Activated CD4-positive, alpha-beta T cell treated with anti-CD3 and anti-CD28 coated beads for 36 hours (primary cell): ENCODE measurements at regions of chr5 and their contacts with region 1.

Region 1: DNA sequence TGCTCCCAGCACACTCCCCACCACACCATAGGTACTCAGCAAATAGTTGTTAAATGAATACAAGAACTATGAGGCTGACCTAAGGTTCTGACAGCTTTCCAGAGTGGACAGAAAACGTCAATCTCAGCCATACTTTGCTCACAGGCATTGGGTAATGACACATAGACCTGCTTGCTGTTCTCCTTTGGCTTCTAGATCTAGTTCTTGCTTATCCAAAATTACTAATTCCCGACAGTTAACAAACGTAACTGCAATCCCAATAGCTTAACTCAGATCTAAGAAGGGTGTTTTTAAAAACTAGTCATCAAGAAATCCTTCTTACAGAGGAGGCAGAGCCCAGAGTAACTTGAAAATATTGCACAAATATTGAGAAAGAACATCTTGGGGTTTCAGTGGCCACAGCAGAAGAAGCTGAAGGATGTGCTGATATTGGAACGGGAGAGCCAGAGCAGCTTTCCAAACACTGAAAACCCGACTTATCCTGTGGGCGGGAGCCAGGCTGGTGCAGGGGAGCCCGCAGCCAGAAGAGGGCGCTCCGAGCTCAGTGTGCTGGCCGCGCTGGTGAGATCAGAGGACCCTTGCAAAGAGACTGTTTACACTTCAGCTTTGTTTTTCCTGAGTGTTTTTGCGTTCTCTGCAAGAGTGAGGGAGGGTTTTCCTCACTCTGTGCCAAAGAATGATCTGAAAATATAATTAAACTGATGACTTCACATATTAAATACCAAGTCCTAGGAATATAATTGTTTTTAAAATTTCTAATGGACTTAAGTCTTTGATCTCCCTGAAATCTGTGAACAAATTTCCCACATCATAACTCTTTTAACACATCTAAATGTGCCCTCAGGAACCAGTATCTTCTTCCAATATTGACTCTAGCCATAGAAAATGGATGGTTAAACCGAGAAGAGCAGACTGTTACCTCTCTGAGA is 30.3 kb downstream of the FGF1 start:
- DNase-seq: peak; percentile 86
- ATAC-seq: peak; percentile 97
- H3K4me3 Mint-ChIP-seq: no peak overlapping the region
- H3K27ac Mint-ChIP-seq: no peak overlapping the region
- H3K4me1 Mint-ChIP-seq: peaks cover 4% of the 10 kb centered on the region
- H3K27me3 Mint-ChIP-seq: peaks cover 2% of the 10 kb centered on the region

Region 2: GRCh38 chr5:142611154-142611553 is 44.4 kb before region 1 on chr5:
- CTCF ChIA-PET with region 1: interaction called, 7 read pairs
- POLR2A ChIA-PET with region 1: no interaction called
- intact Hi-C with region 1: loop called (anchors 1 kb)
- DNase-seq: peak; percentile 85
- ATAC-seq: peak; percentile 97
- H3K4me3 Mint-ChIP-seq: no peak overlapping the region
- H3K27ac Mint-ChIP-seq: no peak overlapping the region
- H3K4me1 Mint-ChIP-seq: no peaks in the 10 kb centered on the region
- H3K27me3 Mint-ChIP-seq: peaks cover 12% of the 10 kb centered on the region

Region 3: DNA sequence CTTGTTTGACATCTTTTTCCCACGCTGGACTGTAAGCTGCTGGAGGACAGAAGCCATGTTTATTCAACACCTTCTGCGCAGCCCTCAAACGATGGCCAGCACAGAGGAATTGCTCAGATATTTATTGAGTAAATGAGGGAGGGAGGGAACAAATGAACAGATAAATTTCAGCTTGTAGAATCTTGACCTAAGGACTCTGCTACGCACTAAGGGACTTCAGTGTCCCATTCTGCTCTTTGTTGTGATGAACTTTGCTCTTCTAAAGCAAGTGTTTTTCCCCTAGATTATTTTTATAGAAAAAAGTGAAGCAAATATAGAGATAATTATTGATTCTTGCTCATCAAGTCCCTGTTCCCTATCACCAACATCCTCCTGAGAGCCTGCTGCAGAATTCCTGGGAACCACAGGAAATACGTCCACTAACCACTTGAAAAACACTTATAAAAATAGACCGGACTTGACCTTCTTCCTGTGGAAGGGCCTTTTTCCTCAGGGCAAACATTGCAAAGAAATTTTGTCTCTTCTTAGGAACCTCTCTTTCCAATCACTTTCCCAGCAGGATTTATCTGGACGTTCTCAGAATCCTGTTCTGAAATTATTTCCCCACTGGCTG is 24.6 kb before region 1 on chr5:
- CTCF ChIA-PET with region 1: no interaction called
- POLR2A ChIA-PET with region 1: no interaction called
- intact Hi-C with region 1: no loop called
- DNase-seq: no peak
- ATAC-seq: no peak
- H3K4me3 Mint-ChIP-seq: no peak overlapping the region
- H3K27ac Mint-ChIP-seq: no peak overlapping the region
- H3K4me1 Mint-ChIP-seq: no peaks in the 10 kb centered on the region
- H3K27me3 Mint-ChIP-seq: no peaks in the 10 kb centered on the region

Region 4: GRCh38 chr5:142644640-142645361 is 10.8 kb before region 1 on chr5:
- CTCF ChIA-PET with region 1: interaction called, 34 read pairs
- POLR2A ChIA-PET with region 1: interaction called, 4 read pairs
- intact Hi-C with region 1: no loop called
- DNase-seq: no peak
- ATAC-seq: peak; percentile 36
- H3K4me3 Mint-ChIP-seq: no peak overlapping the region
- H3K27ac Mint-ChIP-seq: no peak overlapping the region
- H3K4me1 Mint-ChIP-seq: peaks cover 3% of the 10 kb centered on the region
- H3K27me3 Mint-ChIP-seq: peaks cover 12% of the 10 kb centered on the region

Region 5: GRCh38 chr5:142669477-142669876 is 13.9 kb after region 1 on chr5:
- CTCF ChIA-PET with region 1: interaction called, 12 read pairs
- POLR2A ChIA-PET with region 1: no interaction called
- intact Hi-C with region 1: no loop called
- DNase-seq: no peak
- ATAC-seq: no peak
- H3K4me3 Mint-ChIP-seq: no peak overlapping the region
- H3K27ac Mint-ChIP-seq: no peak overlapping the region
- H3K4me1 Mint-ChIP-seq: no peaks in the 10 kb centered on the region
- H3K27me3 Mint-ChIP-seq: peaks cover 2% of the 10 kb centered on the region

Region 6: DNA sequence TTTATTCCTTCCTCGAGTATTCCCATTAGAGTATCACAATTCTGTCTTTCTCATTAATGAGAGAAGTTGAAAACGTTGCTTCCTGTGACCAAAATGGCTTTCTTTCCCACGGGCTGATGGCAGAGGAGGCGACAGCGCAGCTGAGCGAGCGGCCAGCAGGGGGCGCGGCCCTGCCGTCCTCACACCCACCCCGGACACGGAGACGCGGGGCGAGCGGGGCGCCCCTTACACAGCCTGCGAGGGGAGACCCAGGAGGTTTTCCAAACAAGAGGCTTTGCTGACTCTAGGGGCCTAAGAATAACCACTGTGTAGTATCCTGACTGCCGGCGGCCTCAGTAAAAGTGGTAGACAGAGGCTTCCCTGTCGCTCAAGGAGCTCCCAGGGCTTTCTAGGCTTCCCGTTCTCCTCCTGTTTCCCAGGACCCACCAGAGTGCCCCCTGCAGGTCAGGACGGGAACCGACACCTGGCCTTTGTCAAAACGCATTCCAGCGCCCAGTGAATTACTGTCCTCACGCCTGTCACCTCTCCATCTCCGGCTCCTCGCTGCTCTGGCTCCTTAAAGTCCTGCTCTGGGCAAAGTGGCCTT is 57.6 kb after region 1 on chr5:
- CTCF ChIA-PET with region 1: interaction called, 13 read pairs
- POLR2A ChIA-PET with region 1: interaction called, 3 read pairs
- intact Hi-C with region 1: loop called in 1 of 2 experiments (anchors 1 kb)
- DNase-seq: peak; percentile 92
- ATAC-seq: peak; percentile 95
- H3K4me3 Mint-ChIP-seq: peak overlapping the region; percentile 64
- H3K27ac Mint-ChIP-seq: no peak overlapping the region
- H3K4me1 Mint-ChIP-seq: peaks cover 3% of the 10 kb centered on the region
- H3K27me3 Mint-ChIP-seq: no peaks in the 10 kb centered on the region

Region 7: DNA sequence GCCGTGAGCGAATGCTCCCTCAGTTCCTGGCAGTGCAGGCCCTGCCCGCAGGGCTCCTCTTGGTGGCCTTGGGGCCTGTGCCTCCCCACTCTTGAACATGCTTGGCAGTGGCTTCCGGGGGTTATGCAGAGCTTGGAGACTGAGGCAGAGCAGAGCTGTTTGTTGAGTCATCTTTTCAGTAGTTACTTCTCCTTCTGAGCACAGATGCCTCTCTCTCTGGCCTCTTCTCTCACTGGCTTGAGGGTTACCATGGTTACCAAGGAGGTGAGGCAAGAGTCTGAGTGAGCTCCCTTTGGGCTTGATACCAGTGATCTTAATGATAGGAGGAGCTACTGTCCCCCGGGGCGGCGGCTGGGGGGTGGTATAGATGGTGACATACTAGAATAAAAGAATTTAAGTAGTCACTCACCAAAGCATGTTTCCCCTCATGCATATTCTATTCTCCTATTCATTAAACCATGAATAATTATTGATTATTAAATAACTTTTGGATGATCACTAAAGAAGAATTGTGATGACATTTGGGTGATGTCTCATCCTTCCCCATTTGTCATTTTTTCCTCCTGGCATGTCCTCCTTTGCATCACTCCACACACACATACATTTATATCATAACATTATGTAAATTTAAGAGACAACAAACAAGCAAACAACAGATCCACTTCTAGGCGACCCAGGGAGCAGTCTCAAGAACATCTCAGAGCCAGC is 225.6 kb after region 1 on chr5:
- CTCF ChIA-PET with region 1: interaction called, 10 read pairs
- POLR2A ChIA-PET with region 1: no interaction called
- intact Hi-C with region 1: loop called in 1 of 2 experiments (anchors 5 kb)
- DNase-seq: no peak
- ATAC-seq: peak; percentile 58
- H3K4me3 Mint-ChIP-seq: no peak overlapping the region
- H3K27ac Mint-ChIP-seq: no peak overlapping the region
- H3K4me1 Mint-ChIP-seq: no peaks in the 10 kb centered on the region
- H3K27me3 Mint-ChIP-seq: no peaks in the 10 kb centered on the region

Region 8: GRCh38 chr5:142888469-142889085 is 233.0 kb after region 1 on chr5:
- CTCF ChIA-PET with region 1: interaction called, 15 read pairs
- POLR2A ChIA-PET with region 1: no interaction called
- intact Hi-C with region 1: loop called (anchors 2 to 5 kb)
- DNase-seq: no peak
- ATAC-seq: no peak
- H3K4me3 Mint-ChIP-seq: no peak overlapping the region
- H3K27ac Mint-ChIP-seq: no peak overlapping the region
- H3K4me1 Mint-ChIP-seq: no peaks in the 10 kb centered on the region
- H3K27me3 Mint-ChIP-seq: no peaks in the 10 kb centered on the region